Activated B cell treated with CpG ODN at 0.5 μM for 24 hours (primary cell): ENCODE measurements at regions of chr12 and their contacts with region 1.

Region 1: GRCh38 chr12:132593521-132594358 is 16.6 kb downstream of the LRCOL1 start:
- DNase-seq: no peak
- ATAC-seq: peak; percentile 32
- H3K4me3 Mint-ChIP-seq: no peak overlapping the region
- H3K27ac Mint-ChIP-seq: no peak overlapping the region
- H3K4me1 Mint-ChIP-seq: peaks cover 14% of the 10 kb centered on the region
- H3K27me3 Mint-ChIP-seq: peaks cover 6% of the 10 kb centered on the region
- CTCF ChIP-seq: no peak

Region 2: GRCh38 chr12:132608231-132609171 is 14.8 kb after region 1 on chr12:
- CTCF ChIA-PET with region 1: no interaction called
- POLR2A ChIA-PET with region 1: interaction called, 10 read pairs
- intact Hi-C with region 1: no loop called
- DNase-seq: no peak
- ATAC-seq: no peak
- H3K4me3 Mint-ChIP-seq: no peak overlapping the region
- H3K27ac Mint-ChIP-seq: no peak overlapping the region
- H3K4me1 Mint-ChIP-seq: peaks cover 7% of the 10 kb centered on the region
- H3K27me3 Mint-ChIP-seq: peaks cover 37% of the 10 kb centered on the region
- CTCF ChIP-seq: no peak